ENCODE measurements at regions of chr11 and their contacts with region 1.

Region 1: GRCh38 chr11:118791111-118791965 is at the start of gene DDX6:
- DNase-seq: peak; percentile 68
- total RNA-seq, gene DDX6: 56.5 and 59.2 TPM in 2 replicates

Region 2: GRCh38 chr11:118705111-118705741 is 86.1 kb before region 1 on chr11:
- in situ Hi-C with region 1: loop called (anchors 10 kb)
- DNase-seq: peak; percentile 71